ENCODE measurements at regions of chr5 and their contacts with region 1.

Region 1: GRCh38 chr5:4879693-4880303 is 260.3 kb upstream of the ADAMTS16 start:
- DNase-seq: peak; percentile 70
- H3K4me3 ChIP-seq: no peak overlapping the region
- H3K27ac ChIP-seq: no peak overlapping the region
- H3K4me1 ChIP-seq: no peaks in the 10 kb centered on the region
- H3K27me3 ChIP-seq: no peaks in the 10 kb centered on the region
- CTCF ChIP-seq: peak; percentile 72 to 90 (median 88)
- POLR2A ChIP-seq: no peak

Region 2: DNA sequence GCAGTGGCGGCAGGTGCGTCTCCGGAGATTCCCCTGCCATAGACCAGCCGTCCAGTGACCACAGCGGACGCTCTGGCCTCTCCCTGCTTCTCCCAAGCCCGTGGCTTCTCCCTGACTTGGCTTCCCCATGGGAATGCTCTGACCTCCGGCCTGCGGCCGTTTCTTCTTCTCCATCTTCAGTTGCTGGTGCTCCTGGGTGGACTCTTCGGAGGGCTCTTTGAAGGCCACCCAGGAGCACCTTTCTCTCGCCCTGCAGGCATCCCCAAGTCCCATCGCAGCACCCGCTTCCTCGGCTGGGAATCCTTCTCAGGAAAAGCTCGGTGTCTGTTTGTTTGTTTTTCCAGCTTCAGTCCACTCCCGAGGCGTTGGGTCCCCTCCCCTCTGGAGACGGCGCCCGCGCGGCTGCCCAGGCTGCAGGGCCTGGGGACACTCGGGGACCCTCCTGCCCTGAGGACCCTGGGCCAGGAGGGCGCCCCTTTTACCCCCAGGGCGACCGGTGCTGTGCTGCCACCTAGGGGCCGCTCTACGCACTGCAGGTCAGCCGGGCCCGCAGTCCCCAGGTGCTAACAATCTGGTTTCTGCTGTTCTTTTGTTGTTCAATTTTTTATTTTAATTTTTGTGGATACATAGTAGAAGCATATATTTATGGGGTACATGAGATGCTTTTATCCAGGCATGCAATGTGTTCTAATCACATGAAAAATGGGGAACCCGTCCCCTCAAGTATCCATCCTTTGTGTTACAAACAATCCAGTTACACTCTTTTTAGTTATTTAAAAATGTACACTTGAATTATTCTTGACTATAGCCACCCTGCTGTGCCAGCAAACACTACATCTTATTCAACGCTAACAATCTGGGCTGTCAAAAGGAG is 62.4 kb after region 1 on chr5:
- intact Hi-C with region 1: loop called (anchors 5 kb)
- DNase-seq: no peak
- H3K4me3 ChIP-seq: no peak overlapping the region
- H3K27ac ChIP-seq: no peak overlapping the region
- H3K4me1 ChIP-seq: no peaks in the 10 kb centered on the region
- H3K27me3 ChIP-seq: peaks cover 2% of the 10 kb centered on the region
- CTCF ChIP-seq: peak; percentile 33 to 56 (median 44)
- POLR2A ChIP-seq: no peak

Region 3: GRCh38 chr5:5141625-5142532 is 262.1 kb after region 1 on chr5:
- intact Hi-C with region 1: loop called (anchors 5 kb)
- DNase-seq: peak; percentile 73
- H3K4me3 ChIP-seq: no peak overlapping the region
- H3K27ac ChIP-seq: no peak overlapping the region
- H3K4me1 ChIP-seq: peaks cover 2% of the 10 kb centered on the region
- H3K27me3 ChIP-seq: peaks cover 15% of the 10 kb centered on the region
- CTCF ChIP-seq: peak; percentile 51 to 91 (median 80)
- POLR2A ChIP-seq: no peak

Measured in prostate gland (tissue), 2 donors.